Naive thymus-derived CD4-positive, alpha-beta T cell (primary cell): ENCODE measurements at regions of chr16 and their contacts with region 1.

Region 1: DNA sequence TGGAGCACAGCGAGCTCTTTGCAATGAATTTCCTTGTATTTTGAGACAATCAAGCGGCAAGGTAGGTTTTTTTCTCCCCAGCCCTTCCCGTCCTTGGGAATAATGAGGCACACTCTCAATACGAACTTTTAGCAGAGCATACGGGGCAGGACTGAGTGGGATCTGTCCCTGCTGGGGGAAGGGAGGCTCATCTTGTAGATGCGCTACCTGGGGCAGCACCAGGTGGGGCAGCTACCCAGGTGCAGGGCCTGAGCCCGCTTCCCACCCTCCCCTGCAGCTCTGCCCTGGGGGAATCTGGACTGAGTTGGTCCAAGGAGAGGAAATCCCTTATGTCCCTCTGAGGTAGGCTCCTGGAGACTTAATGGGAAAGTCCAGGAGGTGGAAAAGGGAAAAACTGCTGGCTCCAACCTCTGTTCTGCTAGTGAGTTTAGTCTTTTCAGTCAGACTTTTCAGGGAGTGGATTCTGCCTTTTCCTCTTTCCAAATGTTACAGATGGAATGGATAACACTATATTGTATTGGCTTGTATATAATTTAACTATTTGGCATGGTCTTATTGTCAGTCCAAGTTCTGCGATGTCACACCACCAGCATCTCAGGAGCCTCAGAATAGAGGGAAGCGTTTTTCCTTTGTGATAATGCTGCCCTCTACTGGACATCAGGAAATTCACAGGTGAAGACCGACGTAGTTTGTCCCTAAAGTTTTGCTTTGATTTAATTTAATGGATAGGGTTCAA is 9.6 kb upstream of the CES1 start:
- DNase-seq: peak in 5 of 9 donors; percentile 3 to 17 (median 9)
- ATAC-seq: peak; percentile 62
- H3K4me3 ChIP-seq: no peak overlapping the region
- H3K4me3 Mint-ChIP-seq: no peak overlapping the region
- H3K27ac ChIP-seq: no peak overlapping the region
- H3K27ac Mint-ChIP-seq: no peak overlapping the region
- H3K4me1 ChIP-seq: no peaks in the 10 kb centered on the region
- H3K4me1 Mint-ChIP-seq: peaks cover 0 to 1% (median 0%) of the 10 kb centered on the region in 7 donors
- H3K27me3 ChIP-seq: no peaks in the 10 kb centered on the region
- H3K27me3 Mint-ChIP-seq: peaks cover 11 to 46% (median 25%) of the 10 kb centered on the region in 5 donors

Region 2: DNA sequence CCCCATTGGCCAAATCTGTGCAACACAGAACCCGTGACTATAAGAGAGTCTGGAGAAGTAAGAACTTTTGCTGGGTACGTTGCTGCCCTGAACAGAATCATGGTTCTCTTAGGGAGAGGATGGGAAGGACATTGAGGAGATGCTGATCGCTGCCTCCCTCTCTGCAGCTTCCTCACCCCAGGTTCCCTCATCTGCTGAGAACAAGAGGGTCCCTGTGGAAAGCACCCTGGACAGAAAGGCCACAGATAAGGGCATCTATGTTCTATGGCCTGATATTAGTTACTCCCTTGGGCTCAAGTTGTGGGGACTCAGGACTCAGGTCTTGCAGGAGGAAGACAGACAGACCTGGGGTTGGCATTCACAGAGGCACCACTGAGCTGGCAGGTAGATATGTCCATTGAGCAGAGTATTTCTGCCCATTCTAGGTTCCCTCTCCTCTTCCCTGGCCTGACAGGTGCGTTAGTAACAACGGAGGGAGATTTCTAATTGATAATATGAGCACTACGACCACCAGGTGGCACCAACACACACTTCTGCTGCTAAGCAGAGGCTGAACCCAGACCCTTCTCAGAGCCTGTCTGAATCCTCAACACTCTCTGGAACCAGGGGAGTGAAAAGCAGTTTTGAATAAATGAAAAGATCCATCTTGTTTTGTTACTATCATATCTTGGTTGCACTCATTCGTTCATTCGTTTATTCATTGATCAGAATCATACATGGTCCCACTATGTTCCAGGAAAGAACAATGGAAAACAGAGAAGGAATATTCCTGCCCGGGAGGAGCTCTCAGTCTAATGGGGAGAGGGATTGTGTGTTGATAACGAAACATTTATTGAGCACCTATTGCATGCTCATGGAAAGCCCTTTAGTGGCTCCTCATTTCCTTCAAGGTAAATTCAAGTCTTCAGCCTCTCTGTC is 130.3 kb before region 1 on chr16:
- CTCF ChIA-PET with region 1: no interaction called
- POLR2A ChIA-PET with region 1: no interaction called
- intact Hi-C with region 1: loop called (anchors 1 kb)
- DNase-seq: peak in 7 of 9 donors; percentile 14 to 37 (median 24)
- ATAC-seq: peak; percentile 61
- H3K4me3 ChIP-seq: no peak overlapping the region
- H3K4me3 Mint-ChIP-seq: no peak overlapping the region
- H3K27ac ChIP-seq: no peak overlapping the region
- H3K27ac Mint-ChIP-seq: no peak overlapping the region
- H3K4me1 ChIP-seq: no peaks in the 10 kb centered on the region
- H3K4me1 Mint-ChIP-seq: no peaks in the 10 kb centered on the region
- H3K27me3 ChIP-seq: peaks cover 0 to 6% of the 10 kb centered on the region in 2 donors
- H3K27me3 Mint-ChIP-seq: peaks cover 4 to 47% (median 29%) of the 10 kb centered on the region in 5 donors

Region 3: GRCh38 chr16:55856950-55857349 is 14.4 kb after region 1 on chr16:
- CTCF ChIA-PET with region 1: no interaction called
- POLR2A ChIA-PET with region 1: no interaction called
- intact Hi-C with region 1: no loop called
- DNase-seq: no peak
- ATAC-seq: no peak
- H3K4me3 ChIP-seq: no peak overlapping the region
- H3K4me3 Mint-ChIP-seq: no peak overlapping the region
- H3K27ac ChIP-seq: no peak overlapping the region
- H3K27ac Mint-ChIP-seq: no peak overlapping the region
- H3K4me1 ChIP-seq: no peaks in the 10 kb centered on the region
- H3K4me1 Mint-ChIP-seq: peaks cover 0 to under 1% (median 0%) of the 10 kb centered on the region in 7 donors
- H3K27me3 ChIP-seq: no peaks in the 10 kb centered on the region
- H3K27me3 Mint-ChIP-seq: peaks cover 5 to 20% (median 18%) of the 10 kb centered on the region in 5 donors

Region 4: GRCh38 chr16:55871411-55872038 is 29.0 kb after region 1 on chr16:
- CTCF ChIA-PET with region 1: no interaction called
- POLR2A ChIA-PET with region 1: no interaction called
- intact Hi-C with region 1: no loop called
- DNase-seq: no peak
- ATAC-seq: no peak
- H3K4me3 ChIP-seq: no peak overlapping the region
- H3K4me3 Mint-ChIP-seq: no peak overlapping the region
- H3K27ac ChIP-seq: no peak overlapping the region
- H3K27ac Mint-ChIP-seq: no peak overlapping the region
- H3K4me1 ChIP-seq: no peaks in the 10 kb centered on the region
- H3K4me1 Mint-ChIP-seq: no peaks in the 10 kb centered on the region
- H3K27me3 ChIP-seq: no peaks in the 10 kb centered on the region
- H3K27me3 Mint-ChIP-seq: peaks cover 0 to 30% (median 15%) of the 10 kb centered on the region in 5 donors

Region 5: GRCh38 chr16:56294579-56294978 is 452.0 kb after region 1 on chr16:
- CTCF ChIA-PET with region 1: no interaction called
- POLR2A ChIA-PET with region 1: no interaction called
- intact Hi-C with region 1: no loop called
- DNase-seq: no peak
- ATAC-seq: no peak
- H3K4me3 ChIP-seq: no peak overlapping the region
- H3K4me3 Mint-ChIP-seq: no peak overlapping the region
- H3K27ac ChIP-seq: no peak overlapping the region
- H3K27ac Mint-ChIP-seq: no peak overlapping the region
- H3K4me1 ChIP-seq: no peaks in the 10 kb centered on the region
- H3K4me1 Mint-ChIP-seq: peaks cover 0 to 9% (median 0%) of the 10 kb centered on the region in 7 donors
- H3K27me3 ChIP-seq: no peaks in the 10 kb centered on the region
- H3K27me3 Mint-ChIP-seq: peaks cover 0 to 10% (median 0%) of the 10 kb centered on the region in 5 donors